Activated T-helper 2 cell treated with anti-CD3 and anti-CD28 coated beads, Interferon-gamma antibody, Interleukin-2, Interleukin-4, amounts not matched to agents 10 μg/mL and 5 μg/mL and 100 μg/mL, durations not matched to agents 14 hours and 24 hours and 36 hours (primary cell): ENCODE measurements at regions of chr1 and their contacts with region 1.

Region 1: DNA sequence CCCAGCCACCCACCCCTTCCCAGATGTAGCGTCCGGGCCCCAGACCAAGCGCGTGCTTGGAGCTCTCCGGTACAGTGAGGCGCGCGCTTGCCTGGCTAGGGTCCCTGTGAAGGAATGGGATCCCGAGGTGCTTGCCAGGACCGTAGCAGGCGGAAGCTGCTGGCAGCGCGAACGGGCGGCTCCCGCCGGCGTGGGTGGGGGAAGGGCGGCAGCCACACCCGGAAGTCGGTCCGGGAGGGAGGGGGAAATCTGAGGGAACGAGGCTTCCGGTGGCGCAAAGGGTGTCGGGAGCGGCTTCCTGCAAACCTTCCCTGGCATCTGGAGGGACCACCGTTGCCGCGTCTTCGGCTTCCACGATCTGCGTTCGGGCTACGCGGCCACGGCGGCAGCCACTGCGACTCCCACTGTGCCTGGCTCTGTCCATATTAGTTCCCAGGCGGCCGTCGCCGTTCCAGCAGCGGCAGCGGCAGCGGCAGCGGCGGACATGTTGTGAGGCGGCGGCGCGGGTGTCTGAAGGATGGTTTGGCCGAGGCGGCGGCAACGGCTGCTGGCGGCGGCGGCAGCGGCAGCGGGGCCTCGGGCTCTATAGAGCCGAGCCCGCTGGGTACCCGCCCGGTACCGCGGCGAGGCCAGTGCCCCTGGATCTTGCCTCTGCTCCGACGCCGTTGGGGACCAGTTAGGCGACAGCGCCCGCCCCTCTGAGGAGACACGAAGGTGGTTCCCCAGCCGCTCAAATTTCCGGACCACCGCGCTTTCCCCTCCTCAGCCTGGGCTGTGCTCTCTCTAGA is at the start of gene DR1:
- DNase-seq: peak; percentile 88
- H3K4me3 Mint-ChIP-seq: peak within 1 kb of the TSS; percentile 88
- H3K27ac Mint-ChIP-seq: peak within 1 kb of the TSS; percentile 98
- H3K4me1 Mint-ChIP-seq: peaks cover 24% of the 10 kb centered on the region
- H3K27me3 Mint-ChIP-seq: no peaks in the 10 kb centered on the region
- total RNA-seq, gene DR1: 103 and 104 TPM in 2 replicates

Region 2: DNA sequence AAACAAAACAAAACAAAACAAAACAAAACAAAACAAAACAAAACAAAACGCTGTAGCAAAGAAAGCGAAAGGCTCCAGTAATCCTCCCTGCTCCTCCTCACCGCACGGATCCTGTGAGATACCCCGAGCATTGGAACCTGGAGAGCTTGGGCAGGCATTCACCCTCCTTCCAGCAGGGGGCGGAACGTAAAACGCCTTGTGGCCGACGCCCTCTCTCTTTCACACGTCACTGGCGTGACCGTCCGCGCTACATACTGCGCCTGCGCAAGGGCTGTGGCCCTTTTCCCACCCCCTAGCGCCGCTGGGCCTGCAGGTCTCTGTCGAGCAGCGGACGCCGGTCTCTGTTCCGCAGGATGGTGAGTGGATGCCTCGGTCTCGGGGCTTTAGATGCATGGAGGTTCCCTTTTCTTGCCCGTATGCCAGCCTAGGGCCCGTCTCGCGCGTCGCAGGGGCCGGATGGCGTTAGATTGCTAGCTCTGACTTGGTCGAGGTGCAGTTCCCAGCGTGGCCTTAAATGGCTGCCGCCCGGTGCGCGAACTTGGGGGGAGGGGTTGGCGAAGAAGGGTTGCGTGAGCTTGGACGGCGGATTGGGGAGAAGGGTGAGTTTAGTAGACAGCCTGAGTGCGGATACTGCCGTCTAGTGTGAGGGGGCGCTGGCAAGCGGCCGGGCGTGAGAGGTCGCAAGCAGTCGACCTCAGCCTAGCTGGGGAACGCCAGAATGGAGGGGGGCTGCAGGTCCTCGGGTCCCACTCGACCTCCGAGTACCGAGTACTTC is 513.9 kb before region 1 on chr1 and contains the start of gene RPL5:
- intact Hi-C with region 1: loop called (anchors 5 kb)
- DNase-seq: peak; percentile 99
- H3K4me3 Mint-ChIP-seq: peak within 1 kb of the TSS; percentile 95
- H3K27ac Mint-ChIP-seq: peak within 1 kb of the TSS; percentile 99
- H3K4me1 Mint-ChIP-seq: peaks cover 42% of the 10 kb centered on the region
- H3K27me3 Mint-ChIP-seq: no peaks in the 10 kb centered on the region
- total RNA-seq, gene RPL5: 1,185 and 1,195 TPM in 2 replicates

Region 3: GRCh38 chr1:93179886-93180722 is 165.7 kb before region 1 on chr1 and contains the start of gene TMED5:
- intact Hi-C with region 1: loop called (anchors 1 kb)
- DNase-seq: peak; percentile 97
- H3K4me3 Mint-ChIP-seq: peak within 1 kb of the TSS; percentile 97
- H3K27ac Mint-ChIP-seq: peak within 1 kb of the TSS; percentile 99
- H3K4me1 Mint-ChIP-seq: peaks cover 52% of the 10 kb centered on the region
- H3K27me3 Mint-ChIP-seq: no peaks in the 10 kb centered on the region
- total RNA-seq, gene TMED5: 58.6 and 60.4 TPM in 2 replicates

Region 4: GRCh38 chr1:93567255-93567918 is 221.6 kb after region 1 on chr1:
- intact Hi-C with region 1: no loop called
- DNase-seq: no peak
- H3K4me3 Mint-ChIP-seq: no peak overlapping the region
- H3K27ac Mint-ChIP-seq: no peak overlapping the region
- H3K4me1 Mint-ChIP-seq: no peaks in the 10 kb centered on the region
- H3K27me3 Mint-ChIP-seq: no peaks in the 10 kb centered on the region

Region 5: DNA sequence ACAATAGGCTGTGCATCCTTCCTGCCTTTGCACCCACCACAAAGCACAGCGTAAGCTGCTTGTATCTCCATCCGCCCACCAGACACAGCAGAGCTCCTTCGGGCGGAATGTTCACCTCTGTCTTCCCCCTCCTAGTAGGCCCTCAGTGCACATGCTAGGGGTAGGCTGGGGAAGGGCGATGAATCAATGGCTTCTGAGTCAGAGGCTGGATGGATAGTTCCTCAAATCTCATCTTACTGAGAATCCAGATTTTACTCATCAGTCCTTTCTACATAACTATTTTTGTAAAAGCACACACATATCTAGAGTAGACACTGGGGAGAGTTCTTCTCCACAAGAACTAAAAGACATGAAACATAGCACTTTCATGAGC is 262.0 kb after region 1 on chr1:
- intact Hi-C with region 1: loop called (anchors 2 kb)
- DNase-seq: no peak
- H3K4me3 Mint-ChIP-seq: no peak overlapping the region
- H3K27ac Mint-ChIP-seq: peak overlapping the region; percentile 31
- H3K4me1 Mint-ChIP-seq: peaks cover 43% of the 10 kb centered on the region
- H3K27me3 Mint-ChIP-seq: peaks cover 35% of the 10 kb centered on the region

Region 6: DNA sequence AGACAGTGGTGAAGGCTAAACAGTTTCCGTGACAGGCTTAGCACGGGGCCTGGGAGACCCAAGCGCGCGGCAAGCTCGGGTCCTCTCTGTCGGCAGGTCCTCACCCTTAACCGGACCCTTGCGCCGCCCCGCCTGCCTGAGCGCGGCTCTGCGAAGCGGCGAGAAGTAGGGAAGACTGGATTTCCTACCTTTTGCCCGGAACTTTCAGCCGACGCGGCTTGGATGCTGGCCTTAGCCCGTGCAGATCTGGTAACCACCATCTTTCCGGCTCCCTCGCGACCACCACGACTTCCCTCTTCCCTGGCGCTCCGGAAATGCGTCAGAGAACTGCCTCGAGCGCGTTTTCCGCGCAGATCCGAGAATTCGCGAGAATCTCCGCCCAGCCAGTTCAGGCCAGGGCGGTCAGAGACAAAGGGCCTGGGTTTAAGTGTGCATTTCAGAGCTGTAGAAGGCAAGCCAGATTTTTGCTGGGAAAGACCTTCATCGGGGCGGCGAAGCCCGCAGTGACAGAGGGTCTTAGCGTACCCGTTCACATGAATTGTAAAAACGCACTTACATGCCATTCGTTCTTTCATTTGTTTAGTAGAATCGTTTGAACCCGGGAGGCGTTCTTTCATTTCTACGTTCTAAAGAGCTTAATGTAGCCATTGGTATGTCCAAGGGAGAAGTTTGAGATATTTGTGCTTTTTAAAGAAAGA is 533.2 kb after region 1 on chr1 and contains the start of gene DNTTIP2:
- intact Hi-C with region 1: loop called (anchors 10 kb)
- DNase-seq: peak; percentile 86
- H3K4me3 Mint-ChIP-seq: peak within 1 kb of the TSS; percentile 94
- H3K27ac Mint-ChIP-seq: peak within 1 kb of the TSS; percentile 97
- H3K4me1 Mint-ChIP-seq: peaks cover 32% of the 10 kb centered on the region
- H3K27me3 Mint-ChIP-seq: no peaks in the 10 kb centered on the region
- total RNA-seq, gene DNTTIP2: 80.7 and 85.5 TPM in 2 replicates